ENCODE measurements at regions of chr9 and their contacts with region 1.

Region 1: GRCh38 chr9:37079370-37080164 is 40.8 kb upstream of the ZCCHC7 start:
- DNase-seq: peak; percentile 97
- H3K4me3 ChIP-seq: peak overlapping the region; percentile 79
- H3K27ac ChIP-seq: peak overlapping the region; percentile 90
- H3K4me1 ChIP-seq: peaks cover 23% of the 10 kb centered on the region
- H3K27me3 ChIP-seq: no peaks in the 10 kb centered on the region
- CTCF ChIP-seq: no peak

Region 2: GRCh38 chr9:36788534-36788933 is 291.0 kb before region 1 on chr9:
- CTCF ChIA-PET with region 1: no interaction called
- POLR2A ChIA-PET with region 1: no interaction called
- intact Hi-C with region 1: no loop called
- DNase-seq: no peak
- H3K4me3 ChIP-seq: no peak overlapping the region
- H3K27ac ChIP-seq: no peak overlapping the region
- H3K4me1 ChIP-seq: no peaks in the 10 kb centered on the region
- H3K27me3 ChIP-seq: peaks cover 6% of the 10 kb centered on the region
- CTCF ChIP-seq: peak; percentile 47; the same call in 1 of the 2 replicates

Region 3: DNA sequence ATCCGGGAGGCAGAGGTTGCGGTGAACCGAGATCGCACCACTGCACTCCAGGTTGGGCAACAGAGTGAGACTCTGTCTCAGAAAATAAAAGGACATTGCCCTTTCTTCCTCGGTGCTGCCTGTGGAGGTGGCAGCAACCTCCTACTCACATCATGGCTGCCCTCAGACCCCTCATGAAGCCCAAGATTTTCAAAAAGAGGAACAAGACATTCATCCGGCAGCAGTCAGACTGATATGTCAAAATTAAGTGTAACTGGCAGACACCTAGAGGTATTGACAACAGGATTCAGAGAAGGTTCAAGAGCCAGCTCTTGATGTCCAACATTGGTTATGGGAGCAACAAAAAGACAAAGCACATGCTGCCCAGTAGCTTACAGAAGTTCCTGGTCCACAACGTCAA is 32.9 kb before region 1 on chr9:
- CTCF ChIA-PET with region 1: no interaction called
- POLR2A ChIA-PET with region 1: interaction called, 20 read pairs
- intact Hi-C with region 1: no loop called
- DNase-seq: no peak
- H3K4me3 ChIP-seq: no peak overlapping the region
- H3K27ac ChIP-seq: no peak overlapping the region
- H3K4me1 ChIP-seq: no peaks in the 10 kb centered on the region
- H3K27me3 ChIP-seq: no peaks in the 10 kb centered on the region
- CTCF ChIP-seq: no peak

Region 4: GRCh38 chr9:37119907-37120842 is 40.6 kb after region 1 on chr9 and contains the start of gene ZCCHC7:
- CTCF ChIA-PET with region 1: no interaction called
- POLR2A ChIA-PET with region 1: no interaction called
- intact Hi-C with region 1: no loop called
- DNase-seq: peak; percentile 97
- H3K4me3 ChIP-seq: peak within 1 kb of the TSS; percentile 96
- H3K27ac ChIP-seq: peak within 1 kb of the TSS; percentile 97
- H3K4me1 ChIP-seq: peaks cover 17% of the 10 kb centered on the region
- H3K27me3 ChIP-seq: no peaks in the 10 kb centered on the region
- CTCF ChIP-seq: no peak
- total RNA-seq, gene ZCCHC7: 26.0 and 27.9 TPM in 2 replicates

Region 5: GRCh38 chr9:37209431-37210386 is 130.1 kb after region 1 on chr9:
- CTCF ChIA-PET with region 1: no interaction called
- POLR2A ChIA-PET with region 1: no interaction called
- intact Hi-C with region 1: loop called (anchors 10 kb)
- DNase-seq: peak; percentile 65
- H3K4me3 ChIP-seq: no peak overlapping the region
- H3K27ac ChIP-seq: peak overlapping the region; percentile 26
- H3K4me1 ChIP-seq: peaks cover 31% of the 10 kb centered on the region
- H3K27me3 ChIP-seq: no peaks in the 10 kb centered on the region
- CTCF ChIP-seq: peak; percentile 63